Endothelial cell of umbilical vein (primary cell): ENCODE measurements at regions of chr1 and their contacts with region 1.

Region 1: DNA sequence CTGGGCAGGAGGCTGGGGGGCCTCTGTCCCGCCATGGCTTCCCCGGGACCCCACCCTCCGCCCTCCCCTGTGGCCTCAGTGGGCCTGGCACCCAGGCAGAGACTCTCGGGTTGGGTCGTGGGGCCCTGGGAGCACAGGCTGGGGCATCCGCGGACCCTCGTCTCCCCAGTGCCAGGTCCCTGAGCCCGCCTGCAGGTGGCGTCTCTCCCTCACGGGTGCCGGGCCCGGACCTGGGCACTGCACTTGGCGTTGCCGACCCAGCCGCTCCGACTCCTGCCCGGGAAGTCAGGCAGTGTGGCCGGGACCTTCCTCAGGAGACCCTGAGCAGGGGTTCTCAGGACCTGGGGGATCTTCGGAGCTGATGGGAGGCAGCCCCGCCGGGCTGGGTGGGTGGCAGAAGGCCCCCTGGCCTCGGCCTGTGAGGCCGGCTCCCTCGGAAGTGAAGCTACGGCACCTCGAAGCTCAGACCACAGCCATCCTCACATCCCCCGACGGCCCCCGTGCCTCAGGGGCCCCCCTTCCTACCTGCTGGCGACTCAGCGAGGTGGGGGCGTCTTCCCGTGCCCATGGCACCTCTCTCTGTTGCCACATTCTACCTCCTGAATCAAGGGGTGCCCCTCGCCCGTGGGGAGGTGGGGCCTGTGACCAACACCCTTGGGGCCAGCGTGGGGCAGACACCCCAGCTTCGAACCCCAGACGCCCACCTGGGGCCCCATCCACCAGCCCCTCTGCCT is 6.4 kb upstream of the C1orf159 start:
- DNase-seq: peak; percentile 57
- H3K4me3 ChIP-seq: peak overlapping the region in 1 of 3 experiments; percentile 6
- H3K27ac ChIP-seq: no peak overlapping the region
- H3K4me1 ChIP-seq: no peaks in the 10 kb centered on the region
- H3K27me3 ChIP-seq: peaks cover 0 to 2% of the 10 kb centered on the region in 2 experiments
- CTCF ChIP-seq: peak; percentile 80 to 98
- POLR2A ChIP-seq: no peak

Region 2: DNA sequence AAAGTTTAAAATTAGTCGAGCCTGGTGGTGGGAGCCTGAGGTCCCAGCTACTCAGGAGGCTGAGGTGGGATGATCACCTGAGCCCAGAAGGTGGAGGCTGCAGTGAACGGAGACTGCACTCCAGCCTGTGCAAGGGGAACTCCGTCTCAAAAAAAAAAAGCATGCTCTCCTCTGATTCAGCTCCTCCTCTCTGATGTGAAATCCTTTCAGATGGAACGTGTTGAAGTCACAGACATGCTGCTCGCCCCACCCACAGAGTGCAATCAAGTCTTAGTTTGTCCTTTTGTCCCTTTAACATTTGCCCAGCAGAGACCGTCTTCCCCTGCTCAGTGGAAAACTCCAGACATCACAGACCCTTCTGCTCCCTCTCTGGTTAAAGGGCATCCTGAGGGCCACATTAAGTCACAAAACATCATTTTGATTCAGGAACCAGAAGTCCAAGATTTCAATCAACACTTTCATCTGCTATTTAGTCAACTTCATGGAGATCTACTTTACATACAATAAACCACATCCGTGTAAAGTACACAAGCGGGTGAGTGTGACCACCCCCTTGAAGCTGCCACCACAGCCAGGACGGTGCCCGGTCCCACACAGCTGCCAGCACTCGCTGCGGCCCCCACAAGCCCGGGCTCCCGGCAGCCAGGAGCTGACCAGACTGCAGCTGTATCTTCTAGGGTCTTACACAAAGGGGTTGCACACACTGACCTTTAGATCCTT is 29.2 kb before region 1 on chr1:
- CTCF ChIA-PET with region 1: no interaction called
- POLR2A ChIA-PET with region 1: no interaction called
- dilution Hi-C with region 1: no loop called
- intact Hi-C with region 1: no loop called
- DNase-seq: no peak
- H3K4me3 ChIP-seq: no peak overlapping the region
- H3K27ac ChIP-seq: no peak overlapping the region
- H3K4me1 ChIP-seq: no peaks in the 10 kb centered on the region
- H3K27me3 ChIP-seq: no peaks in the 10 kb centered on the region
- CTCF ChIP-seq: no peak
- POLR2A ChIP-seq: no peak

Region 3: GRCh38 chr1:1206376-1207260 is 84.4 kb after region 1 on chr1 and contains the start of gene TNFRSF18:
- CTCF ChIA-PET with region 1: interaction called, 10 read pairs
- POLR2A ChIA-PET with region 1: no interaction called
- dilution Hi-C with region 1: no loop called
- intact Hi-C with region 1: no loop called
- DNase-seq: no peak
- H3K4me3 ChIP-seq: no peak within 1 kb of the TSS
- H3K27ac ChIP-seq: no peak within 1 kb of the TSS
- H3K4me1 ChIP-seq: no peaks in the 10 kb centered on the region
- H3K27me3 ChIP-seq: peaks cover 3 to 15% of the 10 kb centered on the region in 2 experiments
- CTCF ChIP-seq: no peak
- POLR2A ChIP-seq: no peak
- total RNA-seq, gene TNFRSF18: not detected in 2 replicates

Region 4: GRCh38 chr1:1250786-1251284 is 128.6 kb after region 1 on chr1:
- CTCF ChIA-PET with region 1: interaction called, 38 read pairs
- POLR2A ChIA-PET with region 1: no interaction called
- dilution Hi-C with region 1: no loop called
- intact Hi-C with region 1: loop called (anchors 5 kb)
- DNase-seq: no peak
- H3K4me3 ChIP-seq: no peak overlapping the region
- H3K27ac ChIP-seq: peak overlapping the region; percentile 11
- H3K4me1 ChIP-seq: no peaks in the 10 kb centered on the region
- H3K27me3 ChIP-seq: peaks cover 10 to 14% of the 10 kb centered on the region in 2 experiments
- CTCF ChIP-seq: no peak
- POLR2A ChIP-seq: no peak

Region 5: GRCh38 chr1:1285611-1286311 is 163.5 kb after region 1 on chr1:
- CTCF ChIA-PET with region 1: interaction called, 286 read pairs
- POLR2A ChIA-PET with region 1: no interaction called
- dilution Hi-C with region 1: no loop called
- intact Hi-C with region 1: loop called (anchors 1 kb)
- DNase-seq: no peak
- H3K4me3 ChIP-seq: no peak overlapping the region
- H3K27ac ChIP-seq: no peak overlapping the region
- H3K4me1 ChIP-seq: peaks cover 2% of the 10 kb centered on the region
- H3K27me3 ChIP-seq: no peaks in the 10 kb centered on the region
- CTCF ChIP-seq: no peak
- POLR2A ChIP-seq: no peak

Region 6: DNA sequence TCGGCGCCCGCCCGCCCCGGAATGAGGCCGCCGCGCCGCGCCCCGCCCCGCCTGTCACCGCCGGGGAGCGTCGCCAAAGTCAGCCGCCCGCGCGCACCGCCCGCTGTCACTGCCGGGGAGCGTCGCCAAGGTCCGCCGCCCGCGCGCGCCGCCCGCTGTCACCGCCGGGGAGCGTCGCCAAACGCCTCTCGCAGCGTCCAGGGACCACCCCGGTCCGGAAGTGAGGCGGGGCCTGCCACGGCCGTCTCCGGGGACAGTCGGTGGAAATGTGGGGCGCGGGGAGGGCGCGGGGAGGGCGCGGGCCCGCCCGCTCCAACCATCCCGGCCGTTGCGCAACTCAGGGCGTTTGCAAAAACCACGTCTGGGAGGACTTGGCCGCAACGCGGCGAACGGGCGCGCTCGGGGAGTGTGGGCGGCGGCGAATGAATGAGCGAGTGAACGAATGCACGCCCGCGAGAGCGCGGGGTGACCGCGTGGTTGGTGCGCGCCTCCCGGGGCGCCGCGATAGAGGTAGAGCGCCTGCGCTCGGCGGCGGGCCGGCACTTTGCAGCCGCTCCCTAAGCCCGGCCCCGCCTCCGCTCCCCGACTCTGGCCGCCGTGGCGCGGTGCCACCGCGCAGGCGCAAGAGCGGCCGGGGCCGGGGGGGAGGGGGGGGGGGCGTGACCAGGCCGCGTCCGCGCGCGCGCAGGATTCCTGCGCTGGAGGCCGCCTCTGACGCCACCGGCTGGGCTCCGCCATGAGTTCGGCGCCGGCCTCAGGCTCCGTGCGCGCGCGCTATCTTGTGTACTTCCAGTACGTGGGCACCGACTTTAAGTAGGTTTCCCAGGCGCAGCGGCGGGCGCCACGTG is 185.9 kb after region 1 on chr1 and contains the starts of genes ACAP3 and PUSL1:
- CTCF ChIA-PET with region 1: interaction called, 9 read pairs
- POLR2A ChIA-PET with region 1: no interaction called
- dilution Hi-C with region 1: no loop called
- intact Hi-C with region 1: loop called (anchors 5 kb)
- DNase-seq: peak; percentile 80
- H3K4me3 ChIP-seq: peak within 1 kb of the TSS; percentile 56 to 94 (median 66)
- H3K27ac ChIP-seq: peak within 1 kb of the TSS; percentile 65
- H3K4me1 ChIP-seq: peaks cover 15% of the 10 kb centered on the region
- H3K27me3 ChIP-seq: no peaks in the 10 kb centered on the region
- CTCF ChIP-seq: no peak
- POLR2A ChIP-seq: peak; percentile 44
- total RNA-seq, gene ACAP3: 39.0 and 43.0 TPM in 2 replicates
- total RNA-seq, gene PUSL1: 16.6 and 18.8 TPM in 2 replicates